Adrenal gland (tissue), 19 donors: ENCODE measurements at regions of chr1 and their contacts with region 1.

Region 1: GRCh38 chr1:7042322-7043190 is 257.3 kb downstream of the CAMTA1 start:
- DNase-seq: no peak
- H3K4me3 ChIP-seq: no peak overlapping the region
- H3K27ac ChIP-seq: no peak overlapping the region
- H3K4me1 ChIP-seq: no peaks in the 10 kb centered on the region
- H3K27me3 ChIP-seq: no peaks in the 10 kb centered on the region
- CTCF ChIP-seq: peak; percentile 39 to 63 (median 50)
- POLR2A ChIP-seq: no peak

Region 2: GRCh38 chr1:7224644-7225043 is 182.1 kb after region 1 on chr1:
- intact Hi-C with region 1: loop called in 1 of 2 experiments (anchors 10 kb)
- DNase-seq: peak in 2 of 7 donors; percentile 24 to 52
- H3K4me3 ChIP-seq: no peak overlapping the region
- H3K27ac ChIP-seq: no peak overlapping the region
- H3K4me1 ChIP-seq: no peaks in the 10 kb centered on the region
- H3K27me3 ChIP-seq: no peaks in the 10 kb centered on the region
- CTCF ChIP-seq: peak in 1 of 6 experiments; percentile 15
- POLR2A ChIP-seq: no peak

Region 3: DNA sequence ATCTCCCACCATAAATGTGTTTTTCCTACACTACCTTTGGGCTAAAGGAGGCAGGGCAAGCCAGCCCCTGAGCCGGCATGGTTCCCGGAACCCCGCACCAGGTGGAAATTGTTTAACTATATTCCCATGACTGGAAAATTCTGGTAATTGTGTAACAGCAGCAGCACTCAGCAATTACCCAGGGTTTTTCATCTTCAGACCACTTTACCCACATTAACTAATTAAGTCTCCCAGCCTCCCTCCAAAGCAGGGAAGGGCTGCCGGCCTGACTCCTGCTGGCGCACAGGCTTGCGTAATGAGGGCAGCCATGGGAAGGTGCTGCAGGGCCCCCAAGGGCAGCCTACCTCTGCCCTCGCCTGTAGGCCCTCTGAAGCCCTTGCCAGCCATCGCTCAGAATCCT is 587.8 kb after region 1 on chr1:
- intact Hi-C with region 1: loop called in 1 of 2 experiments (anchors 10 kb)
- DNase-seq: peak in 1 of 7 donors; percentile 74
- H3K4me3 ChIP-seq: no peak overlapping the region
- H3K27ac ChIP-seq: peak overlapping the region in 1 of 5 donors; percentile 71
- H3K4me1 ChIP-seq: no peaks in the 10 kb centered on the region
- H3K27me3 ChIP-seq: no peaks in the 10 kb centered on the region
- CTCF ChIP-seq: no peak
- POLR2A ChIP-seq: no peak